ENCODE measurements at regions of chrX and their contacts with region 1.

Region 1: DNA sequence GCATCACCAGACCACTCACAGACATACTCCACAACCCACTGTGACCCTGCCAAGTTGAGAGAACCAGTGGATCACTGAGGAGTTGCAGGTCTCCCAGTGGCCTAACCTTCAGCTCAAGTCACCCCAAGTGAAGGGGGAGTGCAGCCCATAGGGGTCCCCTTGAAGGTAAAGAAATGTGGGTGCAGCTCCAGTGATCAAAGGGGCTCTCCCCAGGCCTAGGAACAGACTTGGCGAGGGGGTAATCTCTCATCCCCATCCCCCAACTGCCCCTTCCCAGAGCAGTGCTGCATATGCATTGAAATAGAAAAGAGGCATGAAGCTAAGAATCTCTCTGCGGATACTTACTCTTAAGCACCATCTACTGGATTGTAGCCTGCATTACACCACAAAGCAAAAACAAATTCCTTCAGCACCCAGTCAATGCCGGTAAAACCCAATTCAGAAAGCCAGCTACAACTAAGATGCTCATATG is 27.0 kb downstream of the MAGEE1 start:
- DNase-seq: no peak
- H3K4me3 Mint-ChIP-seq: no peak overlapping the region
- H3K27ac Mint-ChIP-seq: no peak overlapping the region
- H3K4me1 Mint-ChIP-seq: no peaks in the 10 kb centered on the region
- H3K27me3 Mint-ChIP-seq: no peaks in the 10 kb centered on the region

Region 2: GRCh38 chrX:75361788-75362187 is 1092.7 kb before region 1 on chrX:
- CTCF ChIA-PET with region 1: no interaction called
- intact Hi-C with region 1: no loop called
- DNase-seq: no peak
- H3K4me3 Mint-ChIP-seq: no peak overlapping the region
- H3K27ac Mint-ChIP-seq: no peak overlapping the region
- H3K4me1 Mint-ChIP-seq: no peaks in the 10 kb centered on the region
- H3K27me3 Mint-ChIP-seq: no peaks in the 10 kb centered on the region

Region 3: DNA sequence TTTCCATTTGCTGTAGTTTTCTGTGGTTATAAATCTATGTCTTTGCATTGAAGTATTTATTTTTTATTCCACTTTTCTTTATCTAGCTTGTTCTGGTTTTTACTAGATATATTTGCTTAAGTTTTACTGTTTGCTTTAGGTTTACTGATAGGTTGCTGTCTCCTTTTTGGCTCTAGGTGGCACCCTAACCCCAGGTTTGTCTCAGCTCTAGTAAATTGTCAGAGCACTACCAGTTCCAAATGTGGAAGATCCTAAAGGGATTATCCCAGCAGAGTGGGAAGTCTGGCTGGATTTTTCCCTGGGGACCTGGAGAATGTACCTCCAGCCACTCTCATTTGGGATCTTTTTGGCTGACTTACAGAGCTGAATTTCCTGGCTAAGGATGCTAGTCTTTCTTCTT is 175.5 kb before region 1 on chrX:
- CTCF ChIA-PET with region 1: interaction called, 29 read pairs
- intact Hi-C with region 1: loop called (anchors 1 kb)
- DNase-seq: peak; percentile 52
- H3K4me3 Mint-ChIP-seq: no peak overlapping the region
- H3K27ac Mint-ChIP-seq: no peak overlapping the region
- H3K4me1 Mint-ChIP-seq: no peaks in the 10 kb centered on the region
- H3K27me3 Mint-ChIP-seq: no peaks in the 10 kb centered on the region

Region 4: GRCh38 chrX:76407795-76408194 is 46.7 kb before region 1 on chrX:
- CTCF ChIA-PET with region 1: no interaction called
- intact Hi-C with region 1: loop called (anchors 5 kb)
- DNase-seq: no peak
- H3K4me3 Mint-ChIP-seq: no peak overlapping the region
- H3K27ac Mint-ChIP-seq: no peak overlapping the region
- H3K4me1 Mint-ChIP-seq: peaks cover 3% of the 10 kb centered on the region
- H3K27me3 Mint-ChIP-seq: no peaks in the 10 kb centered on the region

Measured in activated naive CD4-positive, alpha-beta T cell treated with anti-CD3 and anti-CD28 coated beads for 36 hours (primary cell).